ENCODE measurements at regions of chr3 and their contacts with region 1.

Region 1: DNA sequence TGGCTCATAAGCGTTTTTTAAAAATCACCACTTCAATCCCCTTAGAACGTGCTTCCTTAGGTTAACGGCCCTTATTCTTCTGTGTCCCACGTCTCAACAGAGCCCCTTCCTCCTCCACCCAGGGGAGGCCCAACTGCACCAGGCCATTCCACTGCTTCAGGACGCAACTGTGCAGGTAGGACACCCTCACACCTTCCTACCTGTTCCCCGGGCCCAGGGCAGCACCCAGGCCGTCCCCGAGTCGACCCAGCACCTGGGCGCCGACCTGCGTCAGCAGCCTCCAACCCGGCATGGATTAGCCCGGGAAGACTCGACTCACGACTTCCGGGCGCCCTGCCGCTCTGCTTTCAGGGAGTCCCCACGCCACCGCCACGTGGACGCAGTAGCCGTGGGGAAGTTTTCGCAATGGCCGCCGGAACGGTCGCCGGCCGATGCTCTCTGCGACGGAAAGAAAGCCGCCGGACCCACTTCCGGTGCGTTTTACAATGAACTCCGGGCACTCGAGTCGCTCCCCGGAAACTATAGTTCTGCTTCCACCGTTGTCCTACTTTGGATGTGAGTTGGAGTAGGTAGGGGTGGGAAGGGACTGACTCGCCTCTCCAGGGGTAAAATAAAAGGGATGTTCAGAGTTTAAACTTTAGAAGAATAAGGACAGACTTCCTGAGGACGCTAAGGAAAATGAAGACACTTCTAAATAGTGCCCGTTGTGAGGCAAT is at the start of gene MRPL3:
- DNase-seq: peak; percentile 93
- ATAC-seq: peak; percentile 94
- total RNA-seq, gene MRPL3: 61.4 TPM

Region 2: GRCh38 chr3:131053043-131053859 is 449.4 kb before region 1 on chr3:
- intact Hi-C with region 1: loop called (anchors 10 kb)
- DNase-seq: no peak
- ATAC-seq: no peak

Region 3: DNA sequence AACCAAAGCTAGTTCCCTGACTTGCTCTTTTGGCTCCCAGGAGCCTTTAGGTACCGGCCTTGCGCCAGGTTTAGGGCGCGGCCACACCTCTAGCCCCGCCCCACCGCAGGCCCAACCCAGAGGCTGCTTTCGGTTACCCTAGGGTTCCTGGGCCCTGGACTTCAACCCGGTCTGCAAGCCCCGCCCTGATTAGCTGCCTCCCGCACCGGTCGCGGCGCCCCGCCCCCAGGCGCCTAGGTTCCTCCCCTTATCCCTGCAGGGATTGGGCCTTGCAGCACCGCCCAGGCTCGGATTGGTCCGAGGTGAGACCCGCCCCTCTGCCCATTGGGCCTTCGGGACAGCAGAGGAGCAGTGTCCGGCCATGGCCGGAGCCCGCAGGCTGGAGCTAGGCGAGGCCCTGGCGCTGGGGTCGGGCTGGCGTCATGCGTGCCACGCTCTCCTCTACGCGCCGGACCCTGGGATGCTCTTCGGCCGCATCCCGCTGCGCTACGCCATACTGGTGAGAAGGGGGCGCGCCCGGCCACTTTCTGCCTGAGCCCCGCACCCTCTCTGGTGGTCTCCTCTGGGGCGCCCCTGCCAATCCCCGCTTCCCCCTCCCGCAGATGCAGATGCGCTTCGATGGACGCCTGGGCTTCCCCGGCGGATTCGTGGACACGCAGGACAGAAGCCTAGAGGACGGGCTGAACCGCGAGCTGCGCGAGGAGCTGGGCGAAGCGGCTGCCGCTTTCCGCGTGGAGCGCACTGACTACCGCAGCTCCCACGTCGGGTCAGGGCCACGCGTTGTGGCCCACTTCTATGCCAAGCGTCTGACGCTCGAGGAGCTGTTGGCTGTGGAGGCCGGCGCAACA is 121.0 kb before region 1 on chr3 and contains the start of gene NUDT16:
- intact Hi-C with region 1: loop called (anchors 10 kb)
- DNase-seq: peak; percentile 100
- ATAC-seq: peak; percentile 99
- total RNA-seq, gene NUDT16: 23.3 TPM

Region 4: DNA sequence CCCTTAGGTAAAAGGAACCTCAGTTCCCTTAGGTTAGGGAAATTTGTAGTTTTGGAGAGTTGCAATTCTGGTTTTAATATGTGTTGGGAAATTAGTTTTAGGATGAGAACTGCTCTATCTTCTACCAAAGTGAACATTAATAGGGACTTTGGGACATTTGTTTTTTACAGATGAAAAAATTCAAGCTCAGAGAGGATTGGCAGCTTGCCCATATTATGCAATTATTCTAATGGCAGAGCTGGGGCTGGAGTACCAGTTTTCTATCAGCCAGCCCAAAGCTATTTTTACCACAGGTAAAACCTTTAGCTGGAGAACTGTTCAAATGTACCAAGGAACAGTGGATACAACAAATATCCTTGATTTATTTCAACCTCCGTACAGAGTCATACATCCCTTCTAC is 405.1 kb after region 1 on chr3:
- intact Hi-C with region 1: no loop called
- DNase-seq: no peak
- ATAC-seq: no peak

Measured in Right ventricle myocardium inferior (tissue), 1 donor.